ENCODE measurements at regions of chr5 and their contacts with region 1.

Region 1: DNA sequence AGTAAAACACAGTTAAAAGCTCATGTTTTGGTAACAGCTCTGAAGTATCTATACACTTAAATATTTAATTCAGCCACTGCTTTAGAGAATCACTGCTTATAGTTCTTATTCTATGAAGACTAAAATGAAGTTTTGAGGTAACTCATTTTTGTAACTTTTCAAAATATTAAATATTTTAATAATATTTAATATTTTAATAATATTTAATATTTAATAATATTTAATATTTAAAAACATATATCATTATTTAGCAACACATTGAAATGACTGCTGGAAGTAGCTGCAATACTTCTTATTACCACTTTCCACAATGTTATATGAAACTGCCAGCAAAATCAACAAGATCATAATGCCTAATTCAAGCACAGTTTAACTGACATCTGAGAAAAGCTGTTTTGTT is 18.7 kb upstream of the GCNT4 start:
- DNase-seq: no peak
- ATAC-seq: no peak
- H3K4me3 ChIP-seq: no peak overlapping the region
- H3K27ac ChIP-seq: no peak overlapping the region
- H3K4me1 ChIP-seq: no peaks in the 10 kb centered on the region
- H3K27me3 ChIP-seq: peaks cover 3% of the 10 kb centered on the region; the same call in 1 of the 2 replicates
- CTCF ChIP-seq: no peak
- POLR2A ChIP-seq: no peak
- RAD21 ChIP-seq: no peak

Region 2: GRCh38 chr5:74889523-74890105 is 181.5 kb before region 1 on chr5:
- CTCF ChIA-PET with region 1: interaction called, 11 read pairs
- POLR2A ChIA-PET with region 1: no interaction called
- dilution Hi-C with region 1: no loop called
- in situ Hi-C with region 1: no loop called
- intact Hi-C with region 1: no loop called
- DNase-seq: no peak
- ATAC-seq: no peak
- H3K4me3 ChIP-seq: no peak overlapping the region
- H3K27ac ChIP-seq: no peak overlapping the region
- H3K4me1 ChIP-seq: no peaks in the 10 kb centered on the region
- H3K27me3 ChIP-seq: 0 out of 2 replicates have a peak, but pooled peaks cover 2% of the 10 kb centered on the region
- CTCF ChIP-seq: no peak
- POLR2A ChIP-seq: no peak
- RAD21 ChIP-seq: no peak

Region 3: GRCh38 chr5:74953940-74954720 is 117.0 kb before region 1 on chr5:
- CTCF ChIA-PET with region 1: no interaction called
- POLR2A ChIA-PET with region 1: no interaction called
- dilution Hi-C with region 1: no loop called
- in situ Hi-C with region 1: no loop called
- intact Hi-C with region 1: no loop called
- DNase-seq: peak; percentile 77
- ATAC-seq: peak; percentile 48
- H3K4me3 ChIP-seq: no peak overlapping the region
- H3K27ac ChIP-seq: peak overlapping the region; percentile 95
- H3K4me1 ChIP-seq: peaks cover 23% of the 10 kb centered on the region
- H3K27me3 ChIP-seq: no peaks in the 10 kb centered on the region
- CTCF ChIP-seq: no peak
- POLR2A ChIP-seq: no peak
- RAD21 ChIP-seq: no peak

Measured in IMR-90 (cell line).